Calu3 (cell line): ENCODE measurements at regions of chr2 and their contacts with region 1.

Region 1: GRCh38 chr2:64523666-64524603 is at the start of gene AFTPH:
- DNase-seq: peak; percentile 99
- H3K4me3 Mint-ChIP-seq: peak within 1 kb of the TSS; percentile 97
- H3K27ac Mint-ChIP-seq: peak within 1 kb of the TSS; percentile 97
- H3K4me1 Mint-ChIP-seq: peaks cover 17% of the 10 kb centered on the region
- H3K27me3 Mint-ChIP-seq: no peaks in the 10 kb centered on the region
- CTCF ChIP-seq: no peak
- total RNA-seq, gene AFTPH: 42.2 and 47.1 TPM in 2 replicates

Region 2: DNA sequence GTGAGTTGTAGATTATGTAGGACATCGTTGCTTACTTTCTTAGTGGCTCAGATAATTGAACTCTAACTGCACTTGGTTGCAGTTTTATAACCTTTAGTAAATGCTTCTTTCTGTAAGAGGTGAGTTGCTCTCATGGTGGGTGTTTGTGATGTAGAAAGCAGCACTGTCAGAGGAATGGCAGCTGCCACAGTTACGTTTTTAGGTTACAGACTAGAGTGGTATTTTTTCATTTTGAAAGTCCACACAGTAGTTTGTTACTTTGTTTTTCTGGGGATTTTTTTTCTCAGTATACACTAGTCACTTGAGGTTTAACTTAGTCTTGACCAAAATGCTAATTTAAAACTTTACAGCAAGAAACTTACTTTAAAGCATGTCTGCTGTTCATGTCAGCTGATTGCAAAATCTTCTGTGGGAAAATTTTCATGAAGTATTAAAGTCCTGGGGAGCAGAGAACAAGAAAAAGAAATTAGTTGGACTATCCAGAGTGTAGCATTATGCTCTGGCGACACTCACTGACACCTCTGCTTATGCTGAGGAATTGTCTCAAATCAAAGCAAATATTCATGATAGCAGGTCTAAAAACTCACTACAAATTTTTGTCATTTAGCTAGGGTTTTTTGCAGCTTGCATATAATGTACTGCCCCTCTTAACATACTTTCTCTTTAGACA is 15.0 kb after region 1 on chr2:
- CTCF ChIA-PET with region 1: interaction called, 15 read pairs
- intact Hi-C with region 1: no loop called
- DNase-seq: no peak
- H3K4me3 Mint-ChIP-seq: no peak overlapping the region
- H3K27ac Mint-ChIP-seq: no peak overlapping the region
- H3K4me1 Mint-ChIP-seq: peaks cover 41% of the 10 kb centered on the region
- H3K27me3 Mint-ChIP-seq: no peaks in the 10 kb centered on the region
- CTCF ChIP-seq: no peak

Region 3: DNA sequence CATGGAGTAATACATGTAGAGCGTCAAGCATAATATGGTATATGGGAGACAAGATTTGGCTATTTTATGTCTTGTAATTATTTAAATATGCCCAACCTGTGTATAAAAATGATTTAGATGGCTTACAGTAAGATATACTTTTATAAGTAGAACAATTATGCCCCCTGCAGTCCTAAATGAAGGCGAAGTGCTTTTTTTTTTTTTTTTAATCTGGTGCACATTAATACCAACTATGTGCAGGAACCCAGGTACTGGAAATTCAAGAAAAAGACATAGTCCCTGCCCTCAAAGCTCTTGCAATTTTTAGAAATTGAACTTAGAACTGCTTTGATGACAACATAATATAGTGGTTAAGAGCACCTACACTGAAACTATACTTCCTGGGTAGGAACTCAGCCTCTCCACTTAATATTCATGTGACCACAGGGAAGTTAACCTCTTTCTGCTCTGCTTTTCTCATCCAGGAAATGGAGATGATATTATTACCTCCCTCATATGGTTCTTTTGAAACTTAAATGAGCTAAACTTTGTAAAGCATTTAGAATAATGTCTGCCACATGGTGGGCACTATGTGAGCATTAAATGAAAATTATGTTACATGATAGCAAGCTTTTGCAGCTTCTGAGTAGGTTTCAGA is 38.3 kb after region 1 on chr2:
- CTCF ChIA-PET with region 1: interaction called, 10 read pairs
- intact Hi-C with region 1: loop called (anchors 1 kb)
- DNase-seq: no peak
- H3K4me3 Mint-ChIP-seq: no peak overlapping the region
- H3K27ac Mint-ChIP-seq: no peak overlapping the region
- H3K4me1 Mint-ChIP-seq: no peaks in the 10 kb centered on the region
- H3K27me3 Mint-ChIP-seq: no peaks in the 10 kb centered on the region
- CTCF ChIP-seq: no peak

Region 4: DNA sequence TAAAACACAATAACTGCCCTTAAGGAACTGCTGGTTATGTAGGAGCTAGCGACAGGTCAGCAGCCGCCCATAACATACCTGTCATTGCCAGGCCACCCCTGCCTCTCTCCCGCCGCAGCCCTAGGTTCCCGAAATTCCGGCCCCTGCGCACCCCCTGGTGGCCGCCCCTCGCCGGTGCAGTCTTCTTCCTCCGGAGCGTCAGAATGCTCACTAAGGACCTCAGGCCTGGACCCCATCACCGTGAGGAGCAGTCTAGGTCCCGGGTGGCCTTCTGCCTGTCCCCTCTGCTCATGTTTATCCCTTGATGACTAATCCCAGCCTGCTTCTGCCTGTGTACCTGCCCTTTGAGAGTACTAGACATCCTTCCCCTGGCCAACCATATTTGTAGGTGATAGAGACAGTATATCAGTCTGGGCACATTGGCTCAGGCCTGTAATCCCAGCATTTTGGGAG is 349.6 kb after region 1 on chr2:
- CTCF ChIA-PET with region 1: interaction called, 4 read pairs
- intact Hi-C with region 1: loop called (anchors 5 kb)
- DNase-seq: peak; percentile 93
- H3K4me3 Mint-ChIP-seq: no peak overlapping the region
- H3K27ac Mint-ChIP-seq: no peak overlapping the region
- H3K4me1 Mint-ChIP-seq: peaks cover 11% of the 10 kb centered on the region
- H3K27me3 Mint-ChIP-seq: no peaks in the 10 kb centered on the region
- CTCF ChIP-seq: peak; percentile 94

Region 5: GRCh38 chr2:65227425-65228262 is 703.7 kb after region 1 on chr2 and contains the start of gene ACTR2:
- CTCF ChIA-PET with region 1: no interaction called
- intact Hi-C with region 1: loop called (anchors 10 kb)
- DNase-seq: peak; percentile 95
- H3K4me3 Mint-ChIP-seq: peak within 1 kb of the TSS; percentile 93
- H3K27ac Mint-ChIP-seq: peak within 1 kb of the TSS; percentile 97
- H3K4me1 Mint-ChIP-seq: no peaks in the 10 kb centered on the region
- H3K27me3 Mint-ChIP-seq: no peaks in the 10 kb centered on the region
- CTCF ChIP-seq: no peak
- total RNA-seq, gene ACTR2: 239 and 240 TPM in 2 replicates